ENCODE measurements at regions of chr14 and their contacts with region 1.

Region 1: DNA sequence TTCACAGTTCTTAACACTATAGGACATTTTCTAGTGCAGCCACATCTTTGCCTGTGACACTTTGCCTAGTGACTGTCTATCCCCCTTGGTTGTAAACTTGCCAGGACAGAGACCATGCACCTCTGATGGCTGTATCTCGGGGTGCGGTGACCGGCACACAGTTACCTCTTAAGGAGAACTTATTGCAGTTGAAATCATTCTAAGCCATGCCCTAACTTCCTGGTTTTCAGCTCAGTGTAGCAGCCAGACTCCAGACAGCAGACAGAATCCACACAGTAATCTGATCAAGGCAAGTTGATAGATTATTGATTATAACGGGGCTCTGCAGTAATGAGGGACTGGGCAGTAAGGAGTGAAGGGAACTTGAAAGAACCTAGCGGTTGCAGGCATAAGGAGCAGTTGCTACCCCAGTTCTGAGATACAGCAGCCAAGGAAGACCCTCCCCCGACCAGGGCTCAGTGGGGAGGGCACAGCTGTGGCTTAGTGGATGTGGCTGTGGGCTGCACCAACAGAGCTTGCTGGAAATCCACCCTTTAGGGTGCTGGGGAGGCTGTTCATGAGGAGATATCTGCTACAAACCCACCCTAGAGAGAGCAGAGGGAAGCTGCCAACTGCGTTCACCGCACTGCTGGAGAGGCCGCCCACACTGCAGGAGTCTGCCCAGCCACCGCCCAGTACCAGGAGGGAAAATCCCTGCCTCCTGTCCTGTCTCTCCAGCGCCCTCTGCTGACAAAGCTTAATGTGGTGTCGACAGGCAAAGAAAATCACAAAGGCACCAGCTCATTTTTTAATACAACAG is 58.2 kb upstream of the BEGAIN start:
- DNase-seq: peak; percentile 82 to 93
- ATAC-seq: peak; percentile 80 to 91
- H3K4me3 ChIP-seq: no peak overlapping the region
- H3K27ac ChIP-seq: peak overlapping the region; percentile 65 to 82
- H3K4me1 ChIP-seq: peaks cover 24% of the 10 kb centered on the region
- CTCF ChIP-seq: peak; percentile 76
- EP300 ChIP-seq: no peak
- POLR2A ChIP-seq: no peak
- RAD21 ChIP-seq: peak; percentile 86 to 95

Region 2: DNA sequence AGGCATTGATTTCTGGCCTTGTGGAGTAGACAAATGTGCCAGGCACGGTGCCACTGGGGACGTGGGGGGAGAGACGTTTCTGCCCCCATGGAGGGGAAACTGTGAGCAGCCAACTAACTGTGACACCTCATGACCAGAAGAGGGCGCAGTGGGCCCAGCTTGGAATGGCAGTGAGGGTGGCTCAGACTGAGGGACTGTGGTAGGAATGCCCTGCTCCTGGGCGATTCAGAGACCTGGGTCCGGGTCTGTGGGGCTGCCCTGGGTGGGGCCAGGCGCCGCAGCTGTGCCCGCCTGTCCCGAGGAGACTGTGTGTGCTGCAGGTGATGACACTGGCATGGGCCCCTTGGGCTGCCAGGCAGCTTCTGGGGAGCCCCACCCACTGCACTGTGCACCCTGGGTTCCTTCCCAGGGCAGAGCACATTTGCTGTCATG is 261.6 kb before region 1 on chr14:
- CTCF ChIA-PET with region 1: interaction called, 602 read pairs
- POLR2A ChIA-PET with region 1: interaction called, 4 read pairs
- DNase-seq: peak; percentile 64 to 73
- ATAC-seq: peak; percentile 87 to 95
- H3K4me3 ChIP-seq: no peak overlapping the region
- H3K27ac ChIP-seq: peak overlapping the region; percentile 33 to 65; a peak in 2 of 6 replicates
- H3K4me1 ChIP-seq: peaks cover 38% of the 10 kb centered on the region
- CTCF ChIP-seq: peak; percentile 86
- EP300 ChIP-seq: no peak
- POLR2A ChIP-seq: no peak
- RAD21 ChIP-seq: peak; percentile 77 to 80

Region 3: DNA sequence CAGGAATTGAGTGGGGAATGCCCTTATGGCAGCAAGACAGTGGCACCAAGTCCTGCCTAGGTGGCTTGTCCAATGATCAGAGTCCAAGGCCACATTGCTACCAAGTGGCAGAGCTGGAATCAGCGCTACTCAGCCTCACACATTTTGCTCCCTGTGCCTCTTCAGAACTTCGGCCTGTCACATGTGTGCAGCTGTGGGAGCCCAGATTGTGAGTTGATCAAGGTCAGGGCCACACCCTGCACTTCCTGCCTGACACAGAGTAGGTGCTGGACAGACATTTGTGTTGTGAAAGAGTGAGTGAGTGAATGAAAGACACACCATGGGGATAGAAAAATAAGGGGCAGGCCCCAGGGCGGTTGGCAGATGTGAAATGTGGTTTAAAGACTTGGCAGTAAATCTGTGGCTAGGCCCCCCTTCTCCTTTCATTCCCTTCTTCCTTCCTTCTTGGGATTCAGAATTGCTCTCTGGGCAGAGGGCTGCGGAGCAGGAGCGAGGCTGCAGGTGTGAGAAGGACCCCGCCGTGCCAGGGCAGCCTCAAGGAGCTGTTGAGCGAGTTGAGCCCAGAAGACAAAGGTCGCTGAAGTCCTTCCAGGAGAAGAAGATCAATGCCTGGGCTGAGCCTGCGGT is 238.8 kb before region 1 on chr14:
- CTCF ChIA-PET with region 1: interaction called, 16 read pairs
- POLR2A ChIA-PET with region 1: interaction called, 3 read pairs
- DNase-seq: peak in 1 of 2 experiments; percentile 66
- ATAC-seq: peak in 1 of 2 experiments; percentile 28; a peak in 2 of 6 replicates
- H3K4me3 ChIP-seq: no peak overlapping the region
- H3K27ac ChIP-seq: peak overlapping the region; percentile 82 to 88
- H3K4me1 ChIP-seq: peaks cover 55% of the 10 kb centered on the region
- CTCF ChIP-seq: no peak
- EP300 ChIP-seq: 0 out of 5 replicates have a peak, but pooled peaks of 1 of the 2 experiments have one; percentile 22
- POLR2A ChIP-seq: no peak
- RAD21 ChIP-seq: no peak

Region 4: GRCh38 chr14:100524933-100525243 is 120.5 kb before region 1 on chr14:
- CTCF ChIA-PET with region 1: interaction called, 13 read pairs
- POLR2A ChIA-PET with region 1: no interaction called
- DNase-seq: peak; percentile 41 to 46
- ATAC-seq: peak; percentile 58 to 87; a peak in 3 of 6 replicates
- H3K4me3 ChIP-seq: no peak overlapping the region
- H3K27ac ChIP-seq: no peak overlapping the region
- H3K4me1 ChIP-seq: no peaks in the 10 kb centered on the region
- CTCF ChIP-seq: peak; percentile 55
- EP300 ChIP-seq: no peak
- POLR2A ChIP-seq: no peak
- RAD21 ChIP-seq: peak; percentile 72 to 79

Region 5: DNA sequence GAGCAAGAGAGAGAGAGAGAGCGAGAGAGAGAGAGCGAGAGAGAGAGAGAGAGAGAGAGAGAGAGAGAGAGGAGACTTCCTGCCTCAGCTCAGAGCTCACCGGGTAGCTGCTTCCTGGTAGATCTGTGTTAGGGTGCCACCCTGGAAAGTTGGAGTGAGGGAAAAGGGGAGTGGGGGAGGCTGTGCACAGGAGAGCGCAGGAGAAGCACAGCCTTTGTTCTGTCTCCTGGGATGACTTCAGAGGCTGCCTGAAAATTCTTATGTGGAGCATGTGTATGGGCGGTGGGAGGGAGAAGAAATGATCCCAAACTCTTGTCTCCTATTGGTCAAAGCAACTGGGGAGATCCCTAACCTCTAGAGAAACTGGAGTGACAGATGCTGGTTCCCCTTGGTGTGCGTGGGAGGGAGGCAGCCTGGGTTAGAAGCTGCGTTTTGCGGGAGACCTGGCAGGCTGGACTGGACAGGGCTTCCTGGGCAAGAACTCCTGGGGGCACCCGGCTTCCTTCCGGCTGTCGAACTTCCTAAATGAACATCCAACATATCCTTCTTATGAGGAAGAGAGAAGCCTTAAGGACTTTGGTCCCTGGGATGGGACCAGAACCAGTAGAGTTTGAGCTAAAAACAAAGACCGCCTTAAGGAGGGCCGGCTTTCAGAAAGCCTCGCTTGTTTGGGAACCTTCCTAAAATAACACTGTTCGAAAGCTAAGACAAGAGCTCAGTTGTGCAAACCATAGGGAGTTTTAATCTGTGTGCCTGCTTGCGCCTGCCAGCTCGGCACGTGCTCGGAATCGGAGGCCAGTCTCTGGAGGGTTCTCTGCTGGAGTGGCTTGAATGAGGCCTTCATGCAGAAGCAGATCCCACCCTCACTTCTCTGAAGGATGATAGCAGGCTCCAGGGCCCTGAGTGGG is 27.7 kb before region 1 on chr14:
- CTCF ChIA-PET with region 1: interaction called, 26 read pairs
- POLR2A ChIA-PET with region 1: no interaction called
- DNase-seq: no peak
- ATAC-seq: no peak
- H3K4me3 ChIP-seq: no peak overlapping the region
- H3K27ac ChIP-seq: no peak overlapping the region
- H3K4me1 ChIP-seq: no peaks in the 10 kb centered on the region
- CTCF ChIP-seq: no peak
- EP300 ChIP-seq: no peak
- POLR2A ChIP-seq: no peak
- RAD21 ChIP-seq: no peak

Region 6: GRCh38 chr14:100662879-100663760 is 17.7 kb after region 1 on chr14:
- CTCF ChIA-PET with region 1: interaction called, 46 read pairs
- POLR2A ChIA-PET with region 1: no interaction called
- DNase-seq: peak; percentile 75 to 77
- ATAC-seq: peak in 1 of 2 experiments; percentile 80; a peak in 3 of 6 replicates
- H3K4me3 ChIP-seq: no peak overlapping the region
- H3K27ac ChIP-seq: peak overlapping the region in 1 of 2 experiments; percentile 25; a peak in 1 of 6 replicates
- H3K4me1 ChIP-seq: peaks cover 21% of the 10 kb centered on the region
- CTCF ChIP-seq: peak; percentile 93
- EP300 ChIP-seq: no peak
- POLR2A ChIP-seq: no peak
- RAD21 ChIP-seq: peak; percentile 80 to 87